Mammary epithelial cell (primary cell): ENCODE measurements at regions of chr14 and their contacts with region 1.

Region 1: DNA sequence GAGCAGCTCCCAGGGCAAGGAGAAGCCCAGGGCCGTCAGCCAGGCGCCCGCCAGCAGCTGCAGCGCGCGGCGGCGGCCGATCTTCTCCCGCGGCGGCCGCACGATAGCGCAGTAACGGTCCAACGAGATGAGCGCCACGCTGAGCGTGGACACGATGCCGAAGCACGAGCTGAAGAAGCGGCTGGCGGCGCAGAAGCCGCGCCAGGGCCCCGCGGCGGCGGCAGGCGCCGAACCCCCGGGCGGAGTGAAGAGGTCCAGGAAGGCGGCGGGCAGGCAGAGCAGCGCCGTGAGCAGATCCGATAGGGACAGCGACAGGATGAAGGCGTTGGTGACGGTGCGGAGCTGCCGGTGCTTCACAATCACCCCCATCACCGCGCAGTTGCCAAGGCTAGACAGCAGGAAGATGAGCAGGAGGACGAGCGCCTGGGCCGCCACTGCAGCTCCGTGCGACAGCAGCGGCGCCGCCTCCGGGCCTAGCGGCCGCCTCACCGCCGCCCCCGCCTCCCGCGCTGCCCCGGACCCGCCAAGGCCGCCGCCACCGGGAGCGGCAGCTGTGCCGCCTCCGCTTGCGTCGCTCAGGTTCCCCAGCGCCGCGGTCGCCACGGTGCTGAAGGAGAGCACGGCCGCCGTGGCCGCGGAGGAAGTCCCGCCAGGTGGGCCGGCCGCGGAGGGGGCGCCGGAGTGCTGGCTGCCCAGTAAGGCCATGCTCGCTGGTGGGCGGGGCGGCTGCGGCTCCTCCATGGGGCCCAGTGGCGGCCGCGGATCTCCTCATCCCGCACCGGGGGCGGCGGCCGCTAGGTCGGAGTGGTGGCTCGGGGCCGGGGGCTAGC is 479 bp downstream of the GPR135 start:
- DNase-seq: peak; percentile 26
- H3K4me3 ChIP-seq: peak overlapping the region; percentile 35 to 55 (median 47)
- H3K27ac ChIP-seq: no peak overlapping the region
- H3K4me1 ChIP-seq: peaks cover 12% of the 10 kb centered on the region
- H3K27me3 ChIP-seq: no peaks in the 10 kb centered on the region
- CTCF ChIP-seq: no peak

Region 2: DNA sequence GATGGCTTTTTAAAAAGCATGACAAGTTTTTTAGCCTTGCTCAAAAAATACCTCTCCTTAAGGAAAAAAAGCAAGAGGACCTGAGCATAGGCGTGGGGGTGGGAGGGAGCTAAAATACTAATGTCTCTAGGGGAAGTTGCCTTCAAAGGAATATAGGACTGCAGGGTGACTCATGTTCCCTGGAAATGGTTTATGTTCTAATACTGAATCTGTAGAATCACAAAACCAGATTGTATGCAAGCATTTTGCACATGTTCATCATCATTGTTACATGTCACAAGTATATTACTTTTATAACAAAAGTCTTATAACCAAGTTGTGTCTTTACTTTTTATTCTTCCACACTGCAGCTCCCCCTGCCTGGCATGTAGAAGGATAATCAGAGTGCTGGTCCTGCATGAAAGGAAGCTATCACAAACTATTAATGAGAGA is 36.1 kb before region 1 on chr14:
- CTCF ChIA-PET with region 1: no interaction called
- dilution Hi-C with region 1: no loop called
- in situ Hi-C with region 1: no loop called
- intact Hi-C with region 1: no loop called
- DNase-seq: peak; percentile 33
- H3K4me3 ChIP-seq: no peak overlapping the region
- H3K27ac ChIP-seq: no peak overlapping the region
- H3K4me1 ChIP-seq: peaks cover 8% of the 10 kb centered on the region
- H3K27me3 ChIP-seq: no peaks in the 10 kb centered on the region
- CTCF ChIP-seq: peak; percentile 6 to 41

Region 3: GRCh38 chr14:59483900-59484638 is 19.4 kb after region 1 on chr14 and contains the starts of genes JKAMP and L3HYPDH:
- CTCF ChIA-PET with region 1: interaction called, 3 read pairs
- dilution Hi-C with region 1: no loop called
- in situ Hi-C with region 1: no loop called
- intact Hi-C with region 1: loop called (anchors 2 kb)
- DNase-seq: peak; percentile 92
- H3K4me3 ChIP-seq: peak within 1 kb of the TSS; percentile 78 to 96 (median 93)
- H3K27ac ChIP-seq: peak within 1 kb of the TSS; percentile 77
- H3K4me1 ChIP-seq: peaks cover 32% of the 10 kb centered on the region
- H3K27me3 ChIP-seq: no peaks in the 10 kb centered on the region
- CTCF ChIP-seq: peak in 1 of 2 donors; percentile 54
- total RNA-seq, gene JKAMP: 36.6 to 99.9 TPM
- total RNA-seq, gene L3HYPDH: 23.4 to 30.2 TPM

Region 4: DNA sequence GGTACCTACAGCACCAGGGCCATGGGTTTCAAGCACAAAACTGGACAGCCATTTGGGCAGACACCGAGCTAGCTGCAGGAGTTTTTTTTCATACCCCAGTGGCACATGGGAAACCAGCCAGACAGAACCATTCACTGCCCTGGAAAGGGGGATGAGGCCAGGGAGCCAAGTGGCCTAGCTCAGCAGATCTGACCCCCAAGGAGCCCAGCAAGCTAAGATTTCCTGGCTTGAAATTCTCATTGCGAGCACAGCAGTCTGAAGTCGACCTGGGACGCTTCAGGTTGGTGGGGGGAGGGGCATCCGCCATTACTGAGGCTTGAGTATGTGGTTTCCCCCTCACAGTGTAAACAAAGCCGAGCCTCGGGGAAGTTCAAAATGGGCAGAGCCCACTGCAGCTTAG is 193.1 kb after region 1 on chr14:
- CTCF ChIA-PET with region 1: no interaction called
- dilution Hi-C with region 1: no loop called
- in situ Hi-C with region 1: no loop called
- intact Hi-C with region 1: no loop called
- DNase-seq: no peak
- H3K4me3 ChIP-seq: no peak overlapping the region
- H3K27ac ChIP-seq: no peak overlapping the region
- H3K4me1 ChIP-seq: no peaks in the 10 kb centered on the region
- H3K27me3 ChIP-seq: no peaks in the 10 kb centered on the region
- CTCF ChIP-seq: no peak